Naive thymus-derived CD4-positive, alpha-beta T cell (primary cell): ENCODE measurements at regions of chr3 and their contacts with region 1.

Region 1: DNA sequence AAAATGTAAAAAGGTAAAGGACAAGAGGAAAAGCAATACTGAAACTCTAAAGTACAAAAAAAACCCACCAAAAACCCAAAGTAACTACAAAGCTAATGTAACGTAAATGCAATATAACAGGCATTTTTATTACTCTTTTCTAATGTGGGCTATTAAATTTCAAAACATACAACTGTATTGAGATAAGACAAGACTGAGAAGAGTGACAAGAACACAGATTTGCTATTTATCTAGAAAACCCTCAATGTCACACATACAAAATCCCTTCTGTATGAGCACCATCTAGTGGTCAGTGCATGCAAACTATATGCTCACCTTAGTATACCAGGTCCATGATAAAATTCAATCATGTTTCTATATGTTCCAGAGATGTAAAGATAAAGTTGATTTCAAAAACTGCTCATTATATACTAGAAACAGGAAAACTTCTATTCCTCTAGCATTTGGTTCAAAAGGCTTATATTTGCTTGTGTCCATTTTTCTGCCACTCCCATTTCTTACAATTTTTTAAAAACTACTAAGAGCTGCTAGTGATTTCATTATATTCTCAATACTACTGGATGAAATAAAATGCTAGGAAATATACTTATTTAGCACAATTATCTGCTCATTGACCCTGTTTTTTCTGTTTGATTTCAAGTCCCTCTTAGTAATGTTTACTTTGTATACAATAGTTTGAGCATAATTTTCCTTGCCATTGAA is 111.4 kb downstream of the DLG1 start:
- DNase-seq: peak in 7 of 9 donors; percentile 7 to 56 (median 43)
- ATAC-seq: peak; percentile 87
- H3K4me3 ChIP-seq: no peak overlapping the region
- H3K4me3 Mint-ChIP-seq: no peak overlapping the region
- H3K27ac ChIP-seq: no peak overlapping the region
- H3K27ac Mint-ChIP-seq: no peak overlapping the region
- H3K4me1 ChIP-seq: no peaks in the 10 kb centered on the region
- H3K4me1 Mint-ChIP-seq: peaks cover 4 to 24% (median 14%) of the 10 kb centered on the region in 7 donors
- H3K27me3 ChIP-seq: no peaks in the 10 kb centered on the region
- H3K27me3 Mint-ChIP-seq: no peaks in the 10 kb centered on the region

Region 2: DNA sequence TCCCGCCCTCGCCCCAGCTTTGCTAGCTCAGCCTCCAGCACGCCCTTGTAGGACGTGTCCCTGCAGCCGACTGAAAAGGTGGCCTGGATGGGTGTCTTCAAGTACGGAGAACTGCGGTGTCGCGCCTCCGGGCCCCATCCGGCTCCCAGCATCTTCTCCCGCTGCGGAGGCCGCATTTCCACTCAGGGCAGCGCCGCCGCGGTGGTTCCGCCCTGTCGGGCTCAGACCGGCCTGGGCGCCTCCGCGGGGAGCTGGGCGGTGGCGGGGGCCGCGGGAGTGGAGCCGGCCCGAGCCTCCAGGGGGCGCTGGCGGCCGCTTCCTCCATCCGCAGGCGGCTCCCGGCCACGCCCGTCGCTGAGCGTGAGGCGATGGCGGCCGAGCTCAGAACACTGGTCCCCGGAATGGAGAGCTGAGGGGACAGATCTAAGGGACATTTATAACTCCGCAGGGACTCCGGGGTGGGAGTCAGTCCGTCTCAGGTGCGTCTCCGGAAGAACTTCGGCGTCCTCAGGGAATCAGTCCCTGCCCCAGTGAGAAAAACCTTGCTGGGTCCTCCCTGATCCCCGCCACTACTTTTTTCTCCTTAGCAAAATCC is 658.3 kb before region 1 on chr3:
- CTCF ChIA-PET with region 1: no interaction called
- POLR2A ChIA-PET with region 1: no interaction called
- intact Hi-C with region 1: loop called in 1 of 2 experiments (anchors 5 kb)
- DNase-seq: peak; percentile 7 to 93 (median 44)
- ATAC-seq: peak; percentile 98
- H3K4me3 ChIP-seq: peak overlapping the region; percentile 57
- H3K4me3 Mint-ChIP-seq: peak overlapping the region in 9 of 10 donors; percentile 42 to 80 (median 66)
- H3K27ac ChIP-seq: no peak overlapping the region
- H3K27ac Mint-ChIP-seq: peak overlapping the region in 2 of 9 donors; percentile 62 to 74
- H3K4me1 ChIP-seq: peaks cover 0 to 3% of the 10 kb centered on the region in 2 donors
- H3K4me1 Mint-ChIP-seq: peaks cover 0 to 17% (median 0%) of the 10 kb centered on the region in 7 donors
- H3K27me3 ChIP-seq: no peaks in the 10 kb centered on the region
- H3K27me3 Mint-ChIP-seq: peaks cover 7 to 16% (median 16%) of the 10 kb centered on the region in 5 donors

Region 3: GRCh38 chr3:196837819-196838420 is 349.1 kb before region 1 on chr3:
- CTCF ChIA-PET with region 1: interaction called, 3 read pairs
- POLR2A ChIA-PET with region 1: no interaction called
- intact Hi-C with region 1: loop called (anchors 2 to 5 kb)
- DNase-seq: peak; percentile 37 to 73 (median 66)
- ATAC-seq: peak; percentile 95
- H3K4me3 ChIP-seq: no peak overlapping the region
- H3K4me3 Mint-ChIP-seq: no peak overlapping the region
- H3K27ac ChIP-seq: no peak overlapping the region
- H3K27ac Mint-ChIP-seq: peak overlapping the region in 2 of 9 donors; percentile 31 to 81
- H3K4me1 ChIP-seq: no peaks in the 10 kb centered on the region
- H3K4me1 Mint-ChIP-seq: peaks cover 0 to 6% (median 0%) of the 10 kb centered on the region in 7 donors
- H3K27me3 ChIP-seq: no peaks in the 10 kb centered on the region
- H3K27me3 Mint-ChIP-seq: no peaks in the 10 kb centered on the region

Region 4: DNA sequence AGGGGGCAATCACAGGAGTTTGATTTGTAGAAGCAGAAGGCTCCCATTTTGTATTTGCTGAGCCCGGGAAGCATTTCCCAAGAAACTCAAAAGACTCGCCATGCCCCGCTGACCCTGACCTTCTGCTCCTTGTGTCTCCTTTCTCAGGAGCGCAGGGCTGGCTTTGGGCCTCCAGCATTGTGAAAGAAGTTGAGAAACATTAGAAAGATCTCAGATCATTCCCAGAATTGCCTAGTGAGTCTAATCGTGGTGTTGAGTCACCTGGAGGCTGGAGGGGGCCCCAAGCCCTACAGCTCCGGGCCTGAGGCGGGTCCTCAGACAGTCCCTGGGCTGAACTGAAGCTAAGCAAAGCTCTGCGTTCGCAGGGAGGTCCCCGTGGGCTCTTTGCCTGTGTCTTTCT is 207.5 kb before region 1 on chr3:
- CTCF ChIA-PET with region 1: interaction called, 4 read pairs
- POLR2A ChIA-PET with region 1: interaction called, 3 read pairs
- intact Hi-C with region 1: loop called (anchors 1 to 2 kb)
- DNase-seq: no peak
- ATAC-seq: no peak
- H3K4me3 ChIP-seq: no peak overlapping the region
- H3K4me3 Mint-ChIP-seq: no peak overlapping the region
- H3K27ac ChIP-seq: no peak overlapping the region
- H3K27ac Mint-ChIP-seq: no peak overlapping the region
- H3K4me1 ChIP-seq: no peaks in the 10 kb centered on the region
- H3K4me1 Mint-ChIP-seq: peaks cover 0 to 7% (median 4%) of the 10 kb centered on the region in 7 donors
- H3K27me3 ChIP-seq: no peaks in the 10 kb centered on the region
- H3K27me3 Mint-ChIP-seq: peaks cover 0 to 21% (median 15%) of the 10 kb centered on the region in 5 donors

Region 5: DNA sequence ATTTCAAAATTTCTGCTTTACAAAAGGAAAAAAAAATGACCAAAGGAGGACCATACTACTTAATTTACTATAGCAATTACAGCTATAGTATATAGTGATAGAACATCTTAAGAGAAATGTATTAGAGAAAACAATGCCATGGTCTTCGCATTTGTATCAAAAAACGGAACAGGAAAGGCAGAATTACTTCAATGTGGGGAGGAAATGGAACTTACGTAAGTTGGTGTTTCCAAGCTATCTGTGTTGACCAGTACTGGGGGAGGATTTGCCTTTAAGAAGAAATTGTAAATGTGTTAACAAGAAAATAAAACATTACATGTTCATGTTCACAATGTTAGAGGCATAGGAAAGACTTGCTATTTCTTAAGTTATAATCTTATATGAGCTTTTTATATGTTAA is 37.5 kb before region 1 on chr3:
- CTCF ChIA-PET with region 1: no interaction called
- POLR2A ChIA-PET with region 1: no interaction called
- intact Hi-C with region 1: no loop called
- DNase-seq: no peak
- ATAC-seq: no peak
- H3K4me3 ChIP-seq: no peak overlapping the region
- H3K4me3 Mint-ChIP-seq: no peak overlapping the region
- H3K27ac ChIP-seq: no peak overlapping the region
- H3K27ac Mint-ChIP-seq: no peak overlapping the region
- H3K4me1 ChIP-seq: no peaks in the 10 kb centered on the region
- H3K4me1 Mint-ChIP-seq: peaks cover 0 to 46% (median 22%) of the 10 kb centered on the region in 7 donors
- H3K27me3 ChIP-seq: no peaks in the 10 kb centered on the region
- H3K27me3 Mint-ChIP-seq: no peaks in the 10 kb centered on the region

Region 6: GRCh38 chr3:198051836-198052235 is 864.8 kb after region 1 on chr3:
- CTCF ChIA-PET with region 1: no interaction called
- POLR2A ChIA-PET with region 1: no interaction called
- intact Hi-C with region 1: no loop called
- DNase-seq: no peak
- ATAC-seq: no peak
- H3K4me3 ChIP-seq: no peak overlapping the region
- H3K4me3 Mint-ChIP-seq: no peak overlapping the region
- H3K27ac ChIP-seq: no peak overlapping the region
- H3K27ac Mint-ChIP-seq: no peak overlapping the region
- H3K4me1 ChIP-seq: no peaks in the 10 kb centered on the region
- H3K4me1 Mint-ChIP-seq: peaks cover 0 to 4% (median 0%) of the 10 kb centered on the region in 7 donors
- H3K27me3 ChIP-seq: no peaks in the 10 kb centered on the region
- H3K27me3 Mint-ChIP-seq: peaks cover 4 to 11% (median 6%) of the 10 kb centered on the region in 5 donors